G401 (cell line): ENCODE measurements at regions of chr1 and their contacts with region 1.

Region 1: GRCh38 chr1:167553136-167554027 is at the start of gene CREG1:
- DNase-seq: peak; percentile 97
- total RNA-seq, gene CREG1: 1,472 and 1,526 TPM in 2 replicates

Region 2: DNA sequence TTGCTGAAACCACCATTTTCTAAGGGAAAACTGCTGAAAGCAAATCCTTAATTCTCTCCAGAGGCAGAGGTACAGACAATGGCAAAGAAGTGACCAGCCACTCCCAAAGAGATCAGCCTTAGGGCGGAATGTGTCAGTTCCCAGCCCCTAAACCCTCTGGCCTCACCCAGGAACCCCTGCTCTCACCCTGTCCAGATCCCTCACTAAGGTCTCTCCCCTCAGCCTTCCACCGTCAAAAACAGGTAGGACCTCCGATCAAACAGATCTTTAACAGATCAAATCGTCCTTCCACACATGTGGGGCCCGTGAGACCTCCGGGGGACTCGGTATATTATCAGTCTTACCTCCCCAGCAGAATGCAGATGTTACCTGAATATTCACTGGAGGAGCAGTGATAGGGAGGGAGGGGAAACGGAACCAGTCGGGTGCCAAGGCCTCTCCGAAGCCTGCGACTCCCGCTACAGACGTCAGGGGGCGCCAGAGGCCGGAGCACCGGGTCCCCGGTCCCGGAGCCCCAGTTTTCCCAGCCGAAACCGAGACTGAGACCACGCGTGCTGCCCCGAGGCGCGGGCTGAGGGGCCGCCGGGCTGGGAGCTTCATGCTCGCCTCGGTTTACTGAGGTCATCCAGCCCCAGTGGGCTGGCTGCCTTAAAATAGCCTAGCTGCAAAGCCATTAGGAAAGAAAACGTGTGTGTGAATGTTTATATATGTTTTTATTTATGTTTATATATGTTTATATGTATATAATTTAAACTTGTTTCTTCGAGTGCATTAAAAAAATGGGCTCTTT is 486.9 kb before region 1 on chr1:
- in situ Hi-C with region 1: loop called (anchors 10 kb)
- DNase-seq: peak; percentile 79

Region 3: GRCh38 chr1:167263819-167264464 is 289.4 kb before region 1 on chr1:
- in situ Hi-C with region 1: loop called (anchors 10 kb)
- DNase-seq: no peak